CD8-positive, alpha-beta memory T cell (primary cell): ENCODE measurements at regions of chr11 and their contacts with region 1.

Region 1: GRCh38 chr11:112280268-112281126 is 19.8 kb upstream of the PLET1 start:
- DNase-seq: peak; percentile 48 to 75 (median 73)
- H3K4me3 ChIP-seq: peak overlapping the region; percentile 83
- H3K4me3 Mint-ChIP-seq: peak overlapping the region; percentile 87 to 97 (median 95)
- H3K27ac ChIP-seq: no peak overlapping the region
- H3K27ac Mint-ChIP-seq: peak overlapping the region in 7 of 8 donors; percentile 58 to 95 (median 82)
- H3K4me1 ChIP-seq: peaks cover 3% of the 10 kb centered on the region
- H3K4me1 Mint-ChIP-seq: peaks cover 12 to 17% (median 17%) of the 10 kb centered on the region in 3 donors
- H3K27me3 ChIP-seq: no peaks in the 10 kb centered on the region
- H3K27me3 Mint-ChIP-seq: peaks cover 0 to 3% of the 10 kb centered on the region in 2 donors

Region 2: GRCh38 chr11:112050721-112051120 is 229.8 kb before region 1 on chr11:
- CTCF ChIA-PET with region 1: no interaction called
- POLR2A ChIA-PET with region 1: no interaction called
- DNase-seq: no peak
- H3K4me3 ChIP-seq: no peak overlapping the region
- H3K4me3 Mint-ChIP-seq: no peak overlapping the region
- H3K27ac ChIP-seq: no peak overlapping the region
- H3K27ac Mint-ChIP-seq: no peak overlapping the region
- H3K4me1 ChIP-seq: no peaks in the 10 kb centered on the region
- H3K4me1 Mint-ChIP-seq: peaks cover 11 to 19% (median 13%) of the 10 kb centered on the region in 3 donors
- H3K27me3 ChIP-seq: no peaks in the 10 kb centered on the region
- H3K27me3 Mint-ChIP-seq: no peaks in the 10 kb centered on the region

Region 3: GRCh38 chr11:112113539-112114457 is 166.7 kb before region 1 on chr11:
- CTCF ChIA-PET with region 1: interaction called, 12 read pairs
- POLR2A ChIA-PET with region 1: no interaction called
- DNase-seq: peak in 2 of 5 donors; percentile 33 to 41
- H3K4me3 ChIP-seq: no peak overlapping the region
- H3K4me3 Mint-ChIP-seq: no peak overlapping the region
- H3K27ac ChIP-seq: no peak overlapping the region
- H3K27ac Mint-ChIP-seq: no peak overlapping the region
- H3K4me1 ChIP-seq: no peaks in the 10 kb centered on the region
- H3K4me1 Mint-ChIP-seq: peaks cover 3 to 6% (median 6%) of the 10 kb centered on the region in 3 donors
- H3K27me3 ChIP-seq: no peaks in the 10 kb centered on the region
- H3K27me3 Mint-ChIP-seq: peaks cover 0 to 3% of the 10 kb centered on the region in 2 donors

Region 4: GRCh38 chr11:112213753-112214152 is 66.7 kb before region 1 on chr11:
- CTCF ChIA-PET with region 1: interaction called, 198 read pairs
- POLR2A ChIA-PET with region 1: no interaction called
- DNase-seq: no peak
- H3K4me3 ChIP-seq: no peak overlapping the region
- H3K4me3 Mint-ChIP-seq: no peak overlapping the region
- H3K27ac ChIP-seq: no peak overlapping the region
- H3K27ac Mint-ChIP-seq: no peak overlapping the region
- H3K4me1 ChIP-seq: no peaks in the 10 kb centered on the region
- H3K4me1 Mint-ChIP-seq: peaks cover 0 to 5% (median 0%) of the 10 kb centered on the region in 3 donors
- H3K27me3 ChIP-seq: no peaks in the 10 kb centered on the region
- H3K27me3 Mint-ChIP-seq: peaks cover 0 to 15% of the 10 kb centered on the region in 2 donors

Region 5: GRCh38 chr11:112219476-112220232 is 60.8 kb before region 1 on chr11:
- CTCF ChIA-PET with region 1: interaction called, 198 read pairs
- POLR2A ChIA-PET with region 1: interaction called, 3 read pairs
- DNase-seq: peak in 4 of 5 donors; percentile 18 to 68 (median 59)
- H3K4me3 ChIP-seq: no peak overlapping the region
- H3K4me3 Mint-ChIP-seq: peak overlapping the region in 1 of 7 donors; percentile 41
- H3K27ac ChIP-seq: no peak overlapping the region
- H3K27ac Mint-ChIP-seq: peak overlapping the region in 5 of 8 donors; percentile 4 to 78 (median 27)
- H3K4me1 ChIP-seq: no peaks in the 10 kb centered on the region
- H3K4me1 Mint-ChIP-seq: peaks cover 2 to 5% (median 4%) of the 10 kb centered on the region in 3 donors
- H3K27me3 ChIP-seq: no peaks in the 10 kb centered on the region
- H3K27me3 Mint-ChIP-seq: no peaks in the 10 kb centered on the region

Region 6: GRCh38 chr11:112226062-112226830 is 54.3 kb before region 1 on chr11 and contains the start of gene PTS:
- CTCF ChIA-PET with region 1: interaction called, 198 read pairs
- POLR2A ChIA-PET with region 1: interaction called, 4 read pairs
- DNase-seq: peak; percentile 73 to 91 (median 88)
- H3K4me3 ChIP-seq: peak within 1 kb of the TSS; percentile 97
- H3K4me3 Mint-ChIP-seq: peak within 1 kb of the TSS; percentile 93 to 98 (median 95)
- H3K27ac ChIP-seq: peak within 1 kb of the TSS; percentile 96
- H3K27ac Mint-ChIP-seq: peak within 1 kb of the TSS; percentile 98 to 99 (median 99)
- H3K4me1 ChIP-seq: peaks cover 9% of the 10 kb centered on the region
- H3K4me1 Mint-ChIP-seq: peaks cover 16 to 29% (median 28%) of the 10 kb centered on the region in 3 donors
- H3K27me3 ChIP-seq: no peaks in the 10 kb centered on the region
- H3K27me3 Mint-ChIP-seq: no peaks in the 10 kb centered on the region
- total RNA-seq, gene PTS: 38.4 to 40.8 TPM

Region 7: DNA sequence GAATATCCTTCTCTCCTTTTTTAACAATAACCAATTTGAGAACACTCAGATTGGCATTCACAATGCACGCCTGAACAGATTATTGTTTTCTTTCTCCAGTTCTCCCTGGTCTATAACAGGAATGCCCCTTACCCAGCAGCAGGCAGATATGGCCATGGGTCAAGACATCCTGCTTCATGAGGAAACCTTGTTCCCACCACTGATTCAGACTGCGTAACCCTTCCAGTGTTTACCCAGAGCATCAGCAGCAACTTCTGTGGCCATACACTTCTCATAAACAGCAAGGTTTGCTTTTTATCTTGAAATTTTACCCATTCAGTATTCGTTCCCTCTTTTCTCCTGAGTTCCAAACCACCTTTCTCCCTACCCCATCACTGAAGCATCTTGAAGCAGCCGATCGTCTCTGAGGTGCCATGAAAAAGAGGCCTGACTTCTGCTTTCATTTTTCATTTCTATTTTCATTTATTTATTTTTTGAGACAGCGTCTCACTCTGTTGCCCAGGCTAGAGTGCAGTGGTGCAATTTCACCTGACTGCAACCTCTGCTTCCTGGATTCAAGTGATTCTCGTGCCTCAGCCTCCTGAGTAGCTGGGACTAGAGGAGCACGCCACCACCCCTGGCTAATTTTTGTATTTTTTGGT is 44.6 kb before region 1 on chr11:
- CTCF ChIA-PET with region 1: interaction called, 20 read pairs
- POLR2A ChIA-PET with region 1: interaction called, 5 read pairs
- DNase-seq: no peak
- H3K4me3 ChIP-seq: no peak overlapping the region
- H3K4me3 Mint-ChIP-seq: no peak overlapping the region
- H3K27ac ChIP-seq: no peak overlapping the region
- H3K27ac Mint-ChIP-seq: no peak overlapping the region
- H3K4me1 ChIP-seq: no peaks in the 10 kb centered on the region
- H3K4me1 Mint-ChIP-seq: no peaks in the 10 kb centered on the region
- H3K27me3 ChIP-seq: no peaks in the 10 kb centered on the region
- H3K27me3 Mint-ChIP-seq: peaks cover 0 to 1% of the 10 kb centered on the region in 2 donors

Region 8: GRCh38 chr11:112306230-112306629 is 25.7 kb after region 1 on chr11:
- CTCF ChIA-PET with region 1: no interaction called
- POLR2A ChIA-PET with region 1: no interaction called
- DNase-seq: no peak
- H3K4me3 ChIP-seq: no peak overlapping the region
- H3K4me3 Mint-ChIP-seq: no peak overlapping the region
- H3K27ac ChIP-seq: no peak overlapping the region
- H3K27ac Mint-ChIP-seq: peak overlapping the region in 1 of 8 donors; percentile 44
- H3K4me1 ChIP-seq: no peaks in the 10 kb centered on the region
- H3K4me1 Mint-ChIP-seq: no peaks in the 10 kb centered on the region
- H3K27me3 ChIP-seq: no peaks in the 10 kb centered on the region
- H3K27me3 Mint-ChIP-seq: peaks cover 0 to 3% of the 10 kb centered on the region in 2 donors